Psoas muscle (tissue), 8 donors: ENCODE measurements at regions of chr17 and their contacts with region 1.

Region 1: GRCh38 chr17:19876529-19877161 is 8.9 kb upstream of the ULK2 start:
- DNase-seq: peak; percentile 48 to 71
- ATAC-seq: peak in 1 of 4 donors; percentile 56
- H3K4me3 ChIP-seq: no peak overlapping the region
- H3K27ac ChIP-seq: no peak overlapping the region
- H3K4me1 ChIP-seq: no peaks in the 10 kb centered on the region
- H3K27me3 ChIP-seq: no peaks in the 10 kb centered on the region
- CTCF ChIP-seq: no peak

Region 2: GRCh38 chr17:19718604-19719354 is 157.9 kb before region 1 on chr17:
- intact Hi-C with region 1: no loop called
- DNase-seq: peak in 1 of 2 donors; percentile 44
- ATAC-seq: no peak
- H3K4me3 ChIP-seq: no peak overlapping the region
- H3K27ac ChIP-seq: no peak overlapping the region
- H3K4me1 ChIP-seq: peaks cover 4% of the 10 kb centered on the region
- H3K27me3 ChIP-seq: no peaks in the 10 kb centered on the region
- CTCF ChIP-seq: peak; percentile 14

Region 3: DNA sequence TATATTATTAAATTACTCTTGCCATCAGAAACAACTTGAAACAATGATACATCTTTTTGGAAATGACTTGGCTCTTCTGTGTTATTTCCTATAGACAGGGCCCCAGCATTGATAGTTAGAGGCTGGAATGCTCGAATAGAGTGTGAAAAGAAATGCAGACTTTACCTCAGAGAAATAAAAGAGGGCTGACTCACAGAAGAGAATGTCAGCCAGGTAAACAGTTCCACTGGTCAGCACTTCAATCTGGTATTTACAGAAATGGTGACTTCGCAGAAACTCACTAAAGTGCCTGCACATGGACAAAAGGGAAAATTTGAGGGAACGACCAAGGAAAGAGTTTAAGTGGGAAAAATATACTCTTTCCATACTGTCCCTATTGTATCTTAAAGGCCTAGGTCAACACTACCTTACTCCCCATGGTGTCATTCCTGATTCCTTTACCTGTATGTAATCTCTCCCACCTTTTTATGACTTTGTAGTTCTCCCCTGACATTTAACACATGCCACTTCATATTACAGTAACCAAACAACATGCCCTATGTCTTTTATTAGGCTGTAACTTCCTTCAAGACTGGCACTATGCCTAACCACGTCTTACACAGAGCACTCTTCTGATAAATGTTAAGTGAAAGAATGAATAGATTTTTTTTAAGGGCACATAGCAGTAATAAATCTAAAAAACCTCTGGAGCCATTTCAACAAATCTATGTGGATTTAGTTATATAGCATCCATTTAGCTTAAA is 64.2 kb after region 1 on chr17:
- intact Hi-C with region 1: loop called in 1 of 2 experiments (anchors 10 kb)
- DNase-seq: no peak
- ATAC-seq: no peak
- H3K4me3 ChIP-seq: no peak overlapping the region
- H3K27ac ChIP-seq: no peak overlapping the region
- H3K4me1 ChIP-seq: no peaks in the 10 kb centered on the region
- H3K27me3 ChIP-seq: no peaks in the 10 kb centered on the region
- CTCF ChIP-seq: no peak

Region 4: DNA sequence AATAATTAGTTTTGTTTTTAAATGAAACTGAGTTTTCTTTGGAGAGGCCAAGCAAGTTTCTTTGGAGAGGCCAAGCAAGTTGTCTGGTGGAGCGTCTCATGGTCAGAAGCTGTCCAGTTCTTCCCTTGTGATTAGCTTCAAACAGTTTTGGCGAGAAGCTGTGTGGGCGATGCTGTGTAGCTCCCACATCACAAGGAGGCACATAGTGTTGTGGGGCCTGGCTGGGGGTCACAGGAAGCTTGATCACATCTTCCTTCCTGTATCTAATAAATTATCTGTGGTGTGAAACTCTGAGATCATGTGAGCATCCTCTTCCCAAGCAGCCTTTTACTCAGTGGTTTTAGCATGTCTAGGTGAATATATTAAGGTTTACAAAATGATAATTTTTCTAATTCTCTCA is 166.4 kb after region 1 on chr17:
- intact Hi-C with region 1: no loop called
- DNase-seq: no peak
- ATAC-seq: no peak
- H3K4me3 ChIP-seq: no peak overlapping the region
- H3K27ac ChIP-seq: no peak overlapping the region
- H3K4me1 ChIP-seq: no peaks in the 10 kb centered on the region
- H3K27me3 ChIP-seq: no peaks in the 10 kb centered on the region
- CTCF ChIP-seq: no peak